ENCODE measurements at regions of chr10 and their contacts with region 1.

Region 1: DNA sequence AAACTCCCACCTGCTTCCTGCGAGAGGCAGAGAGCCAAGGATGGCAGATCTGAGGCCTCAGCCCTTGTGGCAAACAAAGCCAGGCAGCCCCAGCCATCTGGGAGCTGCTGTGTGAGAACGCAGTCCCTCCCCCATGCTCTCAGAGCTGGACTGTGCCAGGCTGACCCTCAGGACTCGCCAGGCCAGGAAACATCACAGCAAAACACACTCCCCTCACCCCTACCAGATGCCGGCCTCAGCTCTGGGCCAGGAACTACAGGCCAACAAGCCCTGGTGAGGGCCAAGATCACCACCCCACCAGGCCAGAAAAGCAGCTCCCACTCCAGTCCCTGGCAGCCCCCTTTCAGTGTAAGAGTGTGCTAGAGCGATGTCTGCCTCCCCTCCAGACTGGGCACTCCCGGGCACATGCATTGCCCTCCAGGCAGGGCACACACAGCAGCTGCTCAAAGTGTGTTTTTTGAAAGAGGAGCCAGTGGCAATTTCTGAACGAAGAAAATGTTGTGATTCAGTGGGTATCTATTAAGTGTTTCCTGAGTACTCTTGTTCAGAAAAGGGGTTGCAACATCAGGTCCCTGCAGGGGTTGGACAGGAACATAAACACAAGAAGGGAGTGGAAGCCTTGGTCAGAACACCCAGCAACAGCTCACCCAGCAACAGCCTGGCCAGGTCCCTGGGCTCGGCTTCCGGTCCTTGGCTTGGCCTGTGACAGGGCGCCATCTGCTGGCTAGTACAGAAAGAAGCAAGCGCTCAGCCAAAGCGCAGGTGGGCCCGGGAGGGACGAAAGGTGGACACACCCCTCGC is 18.3 kb downstream of the LRRC20 start:
- DNase-seq: peak; percentile 98
- H3K4me3 ChIP-seq: peak overlapping the region; percentile 6 to 20 (median 8)
- H3K27ac ChIP-seq: peak overlapping the region; percentile 85 to 92 (median 88)
- H3K4me1 ChIP-seq: peaks cover 0 to 34% (median 26%) of the 10 kb centered on the region in 4 donors
- H3K27me3 ChIP-seq: no peaks in the 10 kb centered on the region
- CTCF ChIP-seq: peak; percentile 87 to 97 (median 93)
- EP300 ChIP-seq: no peak
- POLR2A ChIP-seq: no peak

Region 2: DNA sequence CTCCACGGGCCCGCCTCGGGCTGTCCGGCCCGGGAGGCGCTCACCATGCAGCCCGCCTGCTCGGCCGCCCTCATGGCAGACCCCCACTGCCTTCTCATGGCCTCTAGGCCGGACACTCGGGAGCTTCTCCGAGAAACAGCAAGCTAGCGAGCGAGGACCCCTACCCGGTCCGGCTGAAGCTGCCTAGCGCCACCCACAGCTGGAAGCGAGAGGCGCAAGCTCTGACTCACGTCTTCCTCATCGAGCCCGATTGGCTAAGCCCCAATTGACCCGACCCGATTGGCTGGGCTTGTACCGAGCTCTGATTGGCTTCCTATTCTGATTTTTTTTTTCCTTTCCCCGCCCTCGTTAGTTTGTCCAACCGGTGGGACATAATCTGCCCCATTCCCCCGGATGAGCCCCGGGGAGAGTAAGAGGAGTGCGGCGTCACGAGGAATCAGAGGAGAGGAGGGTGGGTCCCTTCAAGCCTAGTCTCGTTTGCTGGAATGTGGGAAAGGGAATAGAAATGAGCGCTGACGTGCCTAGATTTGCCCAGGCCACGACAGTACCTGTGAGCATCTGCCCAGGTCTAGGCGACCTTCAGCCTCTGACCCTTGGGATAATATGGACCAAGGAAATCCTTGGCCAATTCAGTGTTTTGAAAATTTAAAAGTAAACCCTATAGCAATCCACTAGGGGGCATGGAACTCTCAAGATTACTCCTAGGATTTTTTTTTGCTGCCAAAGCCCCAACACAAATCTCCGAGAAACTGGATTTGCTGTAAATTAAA is 217.5 kb before region 1 on chr10 and contains the start of gene TYSND1:
- intact Hi-C with region 1: loop called (anchors 10 kb)
- DNase-seq: peak; percentile 99
- H3K4me3 ChIP-seq: peak within 1 kb of the TSS; percentile 69 to 89 (median 78)
- H3K27ac ChIP-seq: peak within 1 kb of the TSS; percentile 95 to 98 (median 96)
- H3K4me1 ChIP-seq: peaks cover 0 to 32% (median 18%) of the 10 kb centered on the region in 4 donors
- H3K27me3 ChIP-seq: no peaks in the 10 kb centered on the region
- CTCF ChIP-seq: peak; percentile 33 to 71 (median 56)
- EP300 ChIP-seq: no peak
- POLR2A ChIP-seq: peak; percentile 68 to 78
- total RNA-seq, gene TYSND1: 7.9 to 10.3 (median 9.0) TPM

Region 3: DNA sequence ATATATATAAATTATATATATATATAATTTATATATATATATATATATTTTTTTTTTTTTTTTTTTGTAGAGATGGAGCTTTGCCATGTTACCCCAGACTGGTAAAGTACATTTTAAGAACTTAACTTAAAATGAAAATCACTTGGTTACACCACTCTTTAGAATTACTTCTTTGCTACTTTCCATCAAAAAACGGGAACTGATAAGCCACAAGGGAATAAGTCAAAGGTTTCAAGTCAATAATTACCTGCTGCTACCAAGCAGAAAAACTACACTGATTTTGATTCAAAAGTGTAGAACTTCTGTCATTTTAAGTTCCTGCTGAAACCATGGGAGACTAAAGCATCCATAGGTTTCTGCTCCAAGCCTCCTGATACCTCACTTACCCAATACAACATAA is 143.1 kb before region 1 on chr10:
- intact Hi-C with region 1: loop called (anchors 1 kb)
- DNase-seq: no peak
- H3K4me3 ChIP-seq: peak overlapping the region in 1 of 4 donors; percentile 23
- H3K27ac ChIP-seq: peak overlapping the region; percentile 32 to 48 (median 42)
- H3K4me1 ChIP-seq: peaks cover 0 to 15% (median 11%) of the 10 kb centered on the region in 4 donors
- H3K27me3 ChIP-seq: no peaks in the 10 kb centered on the region
- CTCF ChIP-seq: no peak
- EP300 ChIP-seq: no peak
- POLR2A ChIP-seq: no peak

Region 4: GRCh38 chr10:70233109-70233938 is 130.8 kb before region 1 on chr10 and contains the start of gene PPA1:
- intact Hi-C with region 1: loop called (anchors 1 kb)
- DNase-seq: peak; percentile 99
- H3K4me3 ChIP-seq: peak within 1 kb of the TSS; percentile 61 to 89 (median 77)
- H3K27ac ChIP-seq: peak within 1 kb of the TSS; percentile 79 to 84 (median 80)
- H3K4me1 ChIP-seq: peaks cover 0 to 38% (median 25%) of the 10 kb centered on the region in 4 donors
- H3K27me3 ChIP-seq: no peaks in the 10 kb centered on the region
- CTCF ChIP-seq: no peak
- EP300 ChIP-seq: no peak
- POLR2A ChIP-seq: peak; percentile 68 to 80
- total RNA-seq, gene PPA1: 51.2 to 99.5 (median 70.6) TPM

Region 5: DNA sequence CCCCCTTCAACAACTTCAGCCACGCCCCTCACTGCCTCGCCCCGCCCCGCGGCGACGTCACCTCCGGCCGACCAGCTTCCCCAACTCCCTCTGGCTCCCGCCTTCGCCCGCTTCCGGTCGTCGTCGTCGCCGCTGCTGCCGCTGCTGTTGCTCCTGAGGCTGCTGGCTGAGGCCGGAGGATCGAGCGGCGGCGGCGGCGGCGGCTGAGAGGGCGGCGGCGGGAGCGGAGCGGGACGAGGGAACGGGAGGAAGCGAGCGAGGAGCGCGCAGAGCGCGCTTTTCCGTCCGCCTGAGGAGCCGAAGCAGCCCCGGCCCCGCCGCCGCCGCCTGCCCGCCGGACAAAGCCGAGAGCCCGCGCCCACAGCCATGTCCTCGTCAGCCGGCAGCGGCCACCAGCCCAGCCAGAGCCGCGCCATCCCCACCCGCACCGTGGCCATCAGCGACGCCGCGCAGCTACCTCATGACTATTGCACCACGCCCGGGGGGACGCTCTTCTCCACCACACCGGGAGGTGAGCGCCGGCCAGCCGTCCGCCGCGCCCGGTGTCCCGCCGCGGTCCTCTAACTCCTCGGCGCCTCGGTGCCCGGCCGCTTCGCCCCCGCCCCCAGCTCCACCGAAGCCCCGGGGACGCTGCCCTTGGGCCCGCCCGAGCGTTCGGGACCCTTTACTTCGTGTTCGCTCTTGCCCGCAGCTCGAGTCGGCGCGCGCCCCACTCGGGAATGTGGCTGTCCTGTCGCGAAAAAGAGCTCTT is 40.0 kb after region 1 on chr10 and contains the start of gene EIF4EBP2:
- intact Hi-C with region 1: loop called (anchors 2 kb)
- DNase-seq: peak; percentile 99
- H3K4me3 ChIP-seq: peak within 1 kb of the TSS; percentile 88 to 92 (median 88)
- H3K27ac ChIP-seq: peak within 1 kb of the TSS; percentile 99 to 100 (median 100)
- H3K4me1 ChIP-seq: peaks cover 0 to 38% (median 29%) of the 10 kb centered on the region in 4 donors
- H3K27me3 ChIP-seq: no peaks in the 10 kb centered on the region
- CTCF ChIP-seq: no peak
- EP300 ChIP-seq: peak in 1 of 4 donors; percentile 9
- POLR2A ChIP-seq: peak; percentile 95 to 97
- total RNA-seq, gene EIF4EBP2: 67.1 to 76.0 (median 72.6) TPM

Region 6: DNA sequence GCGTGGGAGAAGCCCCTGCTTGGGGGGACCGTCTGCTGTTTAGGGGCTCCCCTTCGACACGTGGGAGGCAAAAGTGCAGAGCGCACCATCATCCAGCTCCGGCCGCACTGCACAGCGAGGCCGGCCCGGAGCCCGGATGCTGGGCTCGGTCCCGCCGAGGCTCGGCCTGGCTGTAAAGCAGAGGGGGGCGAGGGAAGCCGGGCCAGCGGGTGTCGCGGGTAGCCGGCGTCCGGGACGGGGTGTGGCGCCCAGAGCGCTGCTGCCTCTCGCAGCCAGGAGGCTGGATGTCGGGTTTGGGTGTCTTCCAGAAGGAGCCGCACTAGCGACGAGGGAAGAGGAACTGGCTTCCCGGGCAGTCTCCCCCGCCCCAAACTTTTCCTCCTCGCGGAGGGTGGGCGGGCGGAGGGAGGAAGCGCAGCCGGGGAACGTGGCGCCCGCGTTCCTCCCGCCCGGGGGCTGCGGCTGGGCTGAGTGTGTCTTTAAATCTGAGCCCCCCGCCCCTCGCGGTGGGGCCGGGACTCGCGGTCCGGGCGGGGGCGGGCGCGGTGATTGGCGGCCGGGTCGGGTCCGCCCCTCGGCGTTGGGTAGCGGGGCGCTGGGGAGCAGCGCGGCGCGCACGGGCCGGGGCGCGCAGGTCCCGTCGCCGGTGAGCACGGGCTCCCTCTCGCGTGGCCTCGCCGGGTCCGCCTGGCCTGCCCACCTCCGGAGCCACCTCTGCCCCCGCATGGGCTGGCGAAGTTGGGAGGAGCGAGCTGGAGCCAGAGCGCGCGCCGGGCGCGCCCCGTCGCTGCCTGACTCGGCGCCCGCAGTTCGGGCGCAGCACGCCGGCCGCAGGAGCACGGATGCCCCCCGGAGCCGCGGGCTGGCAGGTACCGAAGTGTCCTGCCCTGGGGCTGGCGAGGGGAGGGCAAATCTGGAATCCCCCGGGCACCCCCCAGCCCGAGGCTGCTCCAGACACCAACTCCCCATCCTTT is 114.3 kb after region 1 on chr10 and contains the start of gene PALD1:
- intact Hi-C with region 1: no loop called
- DNase-seq: peak; percentile 91
- H3K4me3 ChIP-seq: peak within 1 kb of the TSS; percentile 57 to 81 (median 75)
- H3K27ac ChIP-seq: peak within 1 kb of the TSS; percentile 77 to 90 (median 81)
- H3K4me1 ChIP-seq: peaks cover 0 to 61% (median 54%) of the 10 kb centered on the region in 4 donors
- H3K27me3 ChIP-seq: no peaks in the 10 kb centered on the region
- CTCF ChIP-seq: peak; percentile 22 to 44 (median 24)
- EP300 ChIP-seq: no peak
- POLR2A ChIP-seq: peak in 1 of 2 donors; percentile 20
- total RNA-seq, gene PALD1: 13.9 to 33.8 (median 18.8) TPM